CD8-positive, alpha-beta memory T cell (primary cell): ENCODE measurements at regions of chr3 and their contacts with region 1.

Region 1: DNA sequence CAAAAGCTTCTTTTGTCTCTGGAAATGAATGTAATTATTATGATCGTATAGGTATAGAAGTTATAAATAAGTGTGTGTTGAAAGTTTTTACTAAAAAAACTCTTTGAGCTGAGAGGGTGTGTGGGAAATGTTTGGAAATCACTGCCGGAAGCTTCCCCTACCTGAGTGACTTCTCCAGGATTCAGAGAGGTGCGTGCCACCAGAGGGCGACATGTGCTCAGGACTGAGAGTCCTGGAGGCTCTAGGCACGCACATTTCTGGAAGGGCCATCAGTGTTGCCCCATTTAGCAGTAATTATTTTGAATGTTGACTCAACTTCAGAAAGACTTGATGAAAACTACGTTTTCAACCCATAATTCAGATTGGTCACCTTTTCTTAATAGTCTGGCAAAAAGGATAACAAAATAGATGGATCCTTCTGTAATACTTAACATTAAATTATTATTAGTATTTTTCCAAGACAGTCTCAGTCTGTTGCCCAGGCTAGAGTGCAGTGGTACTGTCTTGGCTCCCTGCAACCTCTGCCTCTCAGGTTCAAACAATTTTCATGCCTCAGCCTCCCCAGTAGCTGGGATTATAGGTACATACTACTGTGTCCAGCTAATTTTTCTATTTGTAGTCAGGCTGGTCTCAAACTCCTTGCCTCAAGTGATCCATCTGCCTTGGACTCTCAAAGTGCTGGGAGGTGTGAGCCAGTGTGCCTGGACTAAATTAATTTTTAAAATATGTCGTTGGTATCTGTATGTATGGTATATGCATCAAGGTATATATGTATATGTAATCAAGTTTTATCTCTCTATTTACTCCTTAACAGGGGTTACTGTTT is 34.5 kb downstream of the GPR171 start:
- DNase-seq: peak; percentile 58 to 86 (median 74)
- H3K4me3 ChIP-seq: no peak overlapping the region
- H3K4me3 Mint-ChIP-seq: no peak overlapping the region
- H3K27ac ChIP-seq: no peak overlapping the region
- H3K27ac Mint-ChIP-seq: peak overlapping the region in 5 of 8 donors; percentile 15 to 55 (median 47)
- H3K4me1 ChIP-seq: peaks cover 30% of the 10 kb centered on the region
- H3K4me1 Mint-ChIP-seq: peaks cover 32 to 43% (median 41%) of the 10 kb centered on the region in 3 donors
- H3K27me3 ChIP-seq: no peaks in the 10 kb centered on the region
- H3K27me3 Mint-ChIP-seq: peaks cover 0 to 2% of the 10 kb centered on the region in 2 donors

Region 2: GRCh38 chr3:150763842-150764483 is 404.5 kb before region 1 on chr3:
- CTCF ChIA-PET with region 1: no interaction called
- POLR2A ChIA-PET with region 1: no interaction called
- DNase-seq: peak in 3 of 5 donors; percentile 24 to 62 (median 37)
- H3K4me3 ChIP-seq: peak overlapping the region; percentile 92
- H3K4me3 Mint-ChIP-seq: peak overlapping the region; percentile 91 to 100 (median 95)
- H3K27ac ChIP-seq: peak overlapping the region; percentile 95
- H3K27ac Mint-ChIP-seq: peak overlapping the region; percentile 98 to 100 (median 100)
- H3K4me1 ChIP-seq: peaks cover 24% of the 10 kb centered on the region
- H3K4me1 Mint-ChIP-seq: peaks cover 37 to 44% (median 44%) of the 10 kb centered on the region in 3 donors
- H3K27me3 ChIP-seq: no peaks in the 10 kb centered on the region
- H3K27me3 Mint-ChIP-seq: peaks cover 0 to 2% of the 10 kb centered on the region in 2 donors

Region 3: DNA sequence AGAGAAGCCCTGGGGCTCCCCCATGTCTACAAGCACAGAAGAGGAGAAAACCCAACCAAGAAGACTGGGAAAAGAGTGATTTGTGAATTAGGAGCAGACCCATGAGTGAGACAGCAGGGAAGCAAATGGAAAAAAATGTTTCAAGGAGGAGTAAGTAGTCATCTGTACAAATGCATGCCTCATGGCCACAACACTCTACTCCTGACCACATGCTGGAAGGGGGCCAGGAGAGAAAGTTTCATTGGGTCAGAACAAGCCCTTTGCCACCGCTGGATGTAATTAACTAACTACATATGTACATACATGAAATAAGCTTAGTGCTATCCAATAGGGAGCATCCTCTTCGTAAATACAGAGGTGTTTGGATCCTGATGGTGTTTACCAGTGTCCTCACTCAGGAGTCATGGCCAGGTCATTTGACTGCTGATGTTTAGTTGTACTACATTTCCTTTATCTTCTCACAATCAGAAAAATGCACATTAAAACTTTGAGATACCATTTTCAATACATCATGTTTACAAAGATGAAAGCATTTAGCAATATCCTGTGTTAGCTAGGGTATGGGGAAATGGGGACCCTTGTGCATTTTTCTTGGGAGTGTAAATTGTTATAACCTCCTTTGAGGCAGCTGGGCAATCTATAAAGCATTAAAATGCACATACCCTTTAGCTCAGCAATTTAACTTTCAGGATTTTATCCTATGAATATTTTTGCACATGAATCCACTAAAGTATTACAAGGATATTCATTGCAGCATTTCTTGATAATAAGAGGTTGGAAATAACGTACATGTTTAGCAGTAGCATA is 223.1 kb before region 1 on chr3:
- CTCF ChIA-PET with region 1: no interaction called
- POLR2A ChIA-PET with region 1: no interaction called
- DNase-seq: no peak
- H3K4me3 ChIP-seq: no peak overlapping the region
- H3K4me3 Mint-ChIP-seq: no peak overlapping the region
- H3K27ac ChIP-seq: no peak overlapping the region
- H3K27ac Mint-ChIP-seq: no peak overlapping the region
- H3K4me1 ChIP-seq: no peaks in the 10 kb centered on the region
- H3K4me1 Mint-ChIP-seq: no peaks in the 10 kb centered on the region
- H3K27me3 ChIP-seq: no peaks in the 10 kb centered on the region
- H3K27me3 Mint-ChIP-seq: peaks cover 28 to 49% of the 10 kb centered on the region in 2 donors

Region 4: GRCh38 chr3:150989208-150989607 is 179.3 kb before region 1 on chr3:
- CTCF ChIA-PET with region 1: no interaction called
- POLR2A ChIA-PET with region 1: no interaction called
- DNase-seq: no peak
- H3K4me3 ChIP-seq: no peak overlapping the region
- H3K4me3 Mint-ChIP-seq: no peak overlapping the region
- H3K27ac ChIP-seq: no peak overlapping the region
- H3K27ac Mint-ChIP-seq: no peak overlapping the region
- H3K4me1 ChIP-seq: no peaks in the 10 kb centered on the region
- H3K4me1 Mint-ChIP-seq: peaks cover 0 to 5% (median 4%) of the 10 kb centered on the region in 3 donors
- H3K27me3 ChIP-seq: no peaks in the 10 kb centered on the region
- H3K27me3 Mint-ChIP-seq: peaks cover 7 to 50% of the 10 kb centered on the region in 2 donors

Region 5: DNA sequence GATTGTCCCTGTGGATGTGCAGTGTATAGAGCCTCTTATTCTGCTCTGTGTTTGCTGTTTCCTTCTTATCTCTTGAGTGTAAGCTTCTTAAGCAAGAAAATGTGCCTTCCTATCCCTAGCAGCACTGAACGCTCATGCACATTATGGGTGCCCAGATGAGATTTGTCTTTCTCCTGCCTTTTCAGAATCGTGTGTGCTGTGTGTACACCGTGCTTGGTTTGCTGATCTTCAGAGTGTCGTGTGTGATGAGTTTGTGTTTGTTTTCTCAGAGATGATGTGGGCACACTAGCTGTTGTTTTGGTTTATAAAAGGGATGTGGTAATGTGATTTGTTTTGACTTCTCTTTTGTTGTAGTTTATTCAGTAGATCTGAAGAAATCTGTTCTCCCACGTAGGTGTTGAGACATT is 14.8 kb after region 1 on chr3:
- CTCF ChIA-PET with region 1: interaction called, 15 read pairs
- POLR2A ChIA-PET with region 1: no interaction called
- DNase-seq: peak in 1 of 5 donors; percentile 42
- H3K4me3 ChIP-seq: no peak overlapping the region
- H3K4me3 Mint-ChIP-seq: peak overlapping the region; percentile 33 to 78 (median 72)
- H3K27ac ChIP-seq: no peak overlapping the region
- H3K27ac Mint-ChIP-seq: peak overlapping the region; percentile 3 to 96 (median 88)
- H3K4me1 ChIP-seq: peaks cover 15% of the 10 kb centered on the region
- H3K4me1 Mint-ChIP-seq: peaks cover 30 to 40% (median 38%) of the 10 kb centered on the region in 3 donors
- H3K27me3 ChIP-seq: no peaks in the 10 kb centered on the region
- H3K27me3 Mint-ChIP-seq: peaks cover 0 to 4% of the 10 kb centered on the region in 2 donors

Region 6: DNA sequence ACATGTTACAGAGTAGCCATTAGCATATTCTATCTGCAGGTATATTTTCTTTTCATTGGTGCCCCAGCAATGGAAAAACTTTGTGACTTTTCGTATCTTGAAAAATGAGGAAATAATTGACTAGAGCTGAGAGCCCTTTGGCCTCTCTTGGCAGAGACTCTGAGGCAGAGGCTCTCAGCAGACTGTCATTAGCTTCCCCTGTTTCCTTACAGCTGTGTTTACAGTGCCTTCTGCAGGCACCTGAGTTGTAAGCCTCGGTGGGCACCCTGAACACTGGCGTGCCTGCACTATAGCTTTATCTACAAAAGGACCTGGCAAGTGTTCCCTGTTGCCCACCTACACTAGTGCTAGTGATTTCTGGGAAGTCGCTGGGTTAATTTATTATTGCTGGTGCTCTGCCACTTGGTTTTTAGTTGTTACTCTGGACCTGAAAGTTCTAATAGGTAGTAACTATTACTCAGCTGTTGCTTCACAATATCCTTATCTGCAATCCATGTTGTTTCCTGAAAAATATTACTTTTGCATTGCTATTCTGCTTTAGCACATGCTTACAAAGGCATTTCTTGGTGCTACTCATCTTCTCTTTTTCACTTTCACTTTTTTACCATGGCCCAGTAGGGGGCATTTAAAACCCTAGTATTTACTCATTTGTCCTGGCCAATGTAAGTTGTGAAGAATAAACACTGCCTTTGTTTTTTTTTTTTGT is 42.3 kb after region 1 on chr3:
- CTCF ChIA-PET with region 1: interaction called, 54 read pairs
- POLR2A ChIA-PET with region 1: no interaction called
- DNase-seq: no peak
- H3K4me3 ChIP-seq: no peak overlapping the region
- H3K4me3 Mint-ChIP-seq: peak overlapping the region in 6 of 7 donors; percentile 44 to 61 (median 56)
- H3K27ac ChIP-seq: no peak overlapping the region
- H3K27ac Mint-ChIP-seq: peak overlapping the region; percentile 26 to 92 (median 80)
- H3K4me1 ChIP-seq: peaks cover 28% of the 10 kb centered on the region
- H3K4me1 Mint-ChIP-seq: peaks cover 37 to 51% (median 50%) of the 10 kb centered on the region in 3 donors
- H3K27me3 ChIP-seq: no peaks in the 10 kb centered on the region
- H3K27me3 Mint-ChIP-seq: no peaks in the 10 kb centered on the region

Region 7: DNA sequence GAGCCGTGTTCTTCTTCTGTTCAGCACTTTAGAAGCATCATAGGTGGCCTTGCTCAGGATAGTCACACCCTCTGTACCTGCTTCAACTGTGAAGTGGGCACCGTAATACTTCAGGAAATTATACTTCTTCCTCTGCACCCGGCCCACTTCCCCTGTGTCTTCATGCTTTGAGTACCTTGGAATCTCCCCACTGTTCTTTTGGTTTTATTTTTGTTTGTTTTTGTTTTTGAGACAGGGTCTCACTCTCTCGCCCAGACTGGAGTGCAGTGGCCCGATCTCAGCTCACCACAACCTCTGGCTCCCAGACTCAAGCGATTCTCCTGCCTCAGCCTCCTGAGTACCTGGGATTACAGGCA is 108.2 kb after region 1 on chr3:
- CTCF ChIA-PET with region 1: interaction called, 83 read pairs
- POLR2A ChIA-PET with region 1: no interaction called
- DNase-seq: peak; percentile 7 to 56 (median 33)
- H3K4me3 ChIP-seq: no peak overlapping the region
- H3K4me3 Mint-ChIP-seq: peak overlapping the region; percentile 55 to 91 (median 81)
- H3K27ac ChIP-seq: no peak overlapping the region
- H3K27ac Mint-ChIP-seq: peak overlapping the region; percentile 59 to 99 (median 94)
- H3K4me1 ChIP-seq: peaks cover 35% of the 10 kb centered on the region
- H3K4me1 Mint-ChIP-seq: peaks cover 45 to 49% (median 48%) of the 10 kb centered on the region in 3 donors
- H3K27me3 ChIP-seq: no peaks in the 10 kb centered on the region
- H3K27me3 Mint-ChIP-seq: no peaks in the 10 kb centered on the region

Region 8: GRCh38 chr3:151290673-151291072 is 122.2 kb after region 1 on chr3:
- CTCF ChIA-PET with region 1: interaction called, 30 read pairs
- POLR2A ChIA-PET with region 1: no interaction called
- DNase-seq: no peak
- H3K4me3 ChIP-seq: no peak overlapping the region
- H3K4me3 Mint-ChIP-seq: no peak overlapping the region
- H3K27ac ChIP-seq: no peak overlapping the region
- H3K27ac Mint-ChIP-seq: no peak overlapping the region
- H3K4me1 ChIP-seq: no peaks in the 10 kb centered on the region
- H3K4me1 Mint-ChIP-seq: no peaks in the 10 kb centered on the region
- H3K27me3 ChIP-seq: no peaks in the 10 kb centered on the region
- H3K27me3 Mint-ChIP-seq: peaks cover 4 to 24% of the 10 kb centered on the region in 2 donors